Caco-2 (cell line): ENCODE measurements at regions of chr1 and their contacts with region 1.

Region 1: DNA sequence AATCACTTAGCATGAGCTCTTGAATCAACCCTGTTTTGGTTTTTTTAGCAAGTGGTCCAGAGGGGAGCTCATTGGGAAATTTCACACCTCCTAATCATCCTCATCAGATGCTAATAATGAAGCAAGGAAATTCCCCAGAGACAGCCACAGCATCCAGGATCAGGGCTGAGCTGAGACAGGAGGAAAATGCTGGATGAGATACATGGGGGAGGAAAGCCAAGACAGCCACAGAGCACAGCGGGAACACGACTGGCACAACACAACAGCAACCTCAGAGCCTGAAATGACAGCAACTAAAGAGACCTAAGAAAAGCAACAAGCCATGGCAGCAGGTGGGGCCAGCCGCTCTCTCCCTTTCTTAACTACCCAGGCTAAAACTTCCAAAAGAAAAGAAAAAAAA is 70.4 kb downstream of the UBR4 start:
- DNase-seq: no peak
- H3K4me3 ChIP-seq: no peak overlapping the region
- H3K4me3 Mint-ChIP-seq: no peak overlapping the region
- H3K27ac Mint-ChIP-seq: no peak overlapping the region
- H3K4me1 ChIP-seq: no peaks in the 10 kb centered on the region; the same call in none of the 2 replicates
- H3K4me1 Mint-ChIP-seq: no peaks in the 10 kb centered on the region
- H3K27me3 ChIP-seq: no peaks in the 10 kb centered on the region
- H3K27me3 Mint-ChIP-seq: no peaks in the 10 kb centered on the region
- CTCF ChIP-seq: no peak

Region 2: GRCh38 chr1:19209990-19210771 is 70.5 kb after region 1 on chr1 and contains the start of gene UBR4:
- CTCF ChIA-PET with region 1: no interaction called
- POLR2A ChIA-PET with region 1: interaction called, 11 read pairs
- intact Hi-C with region 1: no loop called
- DNase-seq: peak; percentile 95
- H3K4me3 ChIP-seq: peak within 1 kb of the TSS; percentile 95
- H3K4me3 Mint-ChIP-seq: peak within 1 kb of the TSS; percentile 92
- H3K27ac Mint-ChIP-seq: peak within 1 kb of the TSS; percentile 90
- H3K4me1 ChIP-seq: peaks cover 28% of the 10 kb centered on the region
- H3K4me1 Mint-ChIP-seq: peaks cover 20% of the 10 kb centered on the region
- H3K27me3 ChIP-seq: no peaks in the 10 kb centered on the region
- H3K27me3 Mint-ChIP-seq: no peaks in the 10 kb centered on the region
- CTCF ChIP-seq: no peak
- total RNA-seq, gene UBR4: 317 and 318 TPM in 2 replicates